IMR-90 (cell line): ENCODE measurements at regions of chrX and their contacts with region 1.

Region 1: DNA sequence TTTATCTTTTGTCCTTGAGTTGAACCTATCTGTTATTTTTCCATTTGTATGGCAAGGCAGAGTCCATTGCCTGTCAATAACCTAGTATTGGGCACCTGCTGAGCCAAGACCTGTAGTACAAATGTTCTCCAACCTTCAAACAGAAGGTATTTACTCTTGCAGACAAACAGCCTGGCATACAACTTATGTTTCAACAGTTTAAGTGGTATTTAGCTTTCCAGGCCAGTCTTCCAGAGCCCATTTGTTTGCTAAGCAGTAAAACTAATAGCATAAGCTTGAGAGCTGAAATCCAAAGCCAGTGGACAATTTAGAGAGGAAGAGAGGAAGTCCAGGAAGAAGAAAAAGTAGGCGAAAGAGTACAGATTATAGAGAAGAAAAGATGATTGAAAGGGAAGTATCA is 979.3 kb downstream of the GLUD2 start:
- DNase-seq: no peak
- ATAC-seq: no peak
- H3K4me3 ChIP-seq: no peak overlapping the region
- H3K27ac ChIP-seq: no peak overlapping the region
- H3K4me1 ChIP-seq: no peaks in the 10 kb centered on the region
- H3K27me3 ChIP-seq: no peaks in the 10 kb centered on the region
- CTCF ChIP-seq: no peak
- POLR2A ChIP-seq: no peak
- RAD21 ChIP-seq: no peak

Region 2: GRCh38 chrX:122004127-122004526 is 22.5 kb before region 1 on chrX:
- CTCF ChIA-PET with region 1: interaction called, 3 read pairs
- POLR2A ChIA-PET with region 1: no interaction called
- dilution Hi-C with region 1: no loop called
- in situ Hi-C with region 1: no loop called
- intact Hi-C with region 1: loop called (anchors 1 kb)
- DNase-seq: no peak
- ATAC-seq: no peak
- H3K4me3 ChIP-seq: no peak overlapping the region
- H3K27ac ChIP-seq: no peak overlapping the region
- H3K4me1 ChIP-seq: no peaks in the 10 kb centered on the region
- H3K27me3 ChIP-seq: no peaks in the 10 kb centered on the region
- CTCF ChIP-seq: no peak
- POLR2A ChIP-seq: no peak
- RAD21 ChIP-seq: no peak